Activated B cell treated with CpG ODN at 0.5 μM for 24 hours (primary cell): ENCODE measurements at regions of chr13 and their contacts with region 1.

Region 1: GRCh38 chr13:38872693-38873092 is 117.9 kb downstream of the STOML3 start:
- DNase-seq: no peak
- ATAC-seq: no peak
- H3K4me3 Mint-ChIP-seq: no peak overlapping the region
- H3K27ac Mint-ChIP-seq: no peak overlapping the region
- H3K4me1 Mint-ChIP-seq: no peaks in the 10 kb centered on the region
- H3K27me3 Mint-ChIP-seq: peaks cover 2% of the 10 kb centered on the region
- CTCF ChIP-seq: no peak

Region 2: DNA sequence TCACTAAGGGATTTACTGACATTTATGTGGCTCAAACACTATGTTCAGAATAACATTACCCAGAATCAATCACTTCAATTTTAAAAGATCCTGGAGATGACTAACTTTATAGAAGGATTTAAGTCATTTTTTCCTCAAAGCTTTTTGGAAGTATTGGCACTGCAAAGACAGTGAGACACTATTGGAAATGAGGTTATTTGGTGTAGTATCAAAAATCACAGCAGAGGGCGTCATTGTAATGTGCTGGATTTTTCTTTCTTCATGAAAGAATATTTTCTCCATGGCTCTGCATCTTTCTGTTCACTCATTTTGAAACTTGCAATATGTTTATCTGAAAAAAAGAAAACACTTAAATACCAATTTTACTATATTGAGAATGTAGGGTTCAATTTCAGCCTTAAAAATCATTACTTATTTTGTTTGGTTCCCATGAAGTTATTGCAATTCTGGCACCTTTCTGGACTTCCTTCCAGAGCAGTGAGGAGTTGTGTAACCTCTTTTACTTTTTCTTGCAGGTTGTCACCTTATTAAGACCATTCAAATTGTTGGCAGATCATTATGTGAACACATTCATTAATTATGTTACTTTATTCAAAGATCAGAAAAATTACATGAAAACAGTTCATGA is 1763.5 kb before region 1 on chr13:
- CTCF ChIA-PET with region 1: no interaction called
- POLR2A ChIA-PET with region 1: no interaction called
- intact Hi-C with region 1: loop called (anchors 1 kb)
- DNase-seq: no peak
- ATAC-seq: no peak
- H3K4me3 Mint-ChIP-seq: no peak overlapping the region
- H3K27ac Mint-ChIP-seq: no peak overlapping the region
- H3K4me1 Mint-ChIP-seq: no peaks in the 10 kb centered on the region
- H3K27me3 Mint-ChIP-seq: peaks cover 2% of the 10 kb centered on the region
- CTCF ChIP-seq: no peak

Region 3: DNA sequence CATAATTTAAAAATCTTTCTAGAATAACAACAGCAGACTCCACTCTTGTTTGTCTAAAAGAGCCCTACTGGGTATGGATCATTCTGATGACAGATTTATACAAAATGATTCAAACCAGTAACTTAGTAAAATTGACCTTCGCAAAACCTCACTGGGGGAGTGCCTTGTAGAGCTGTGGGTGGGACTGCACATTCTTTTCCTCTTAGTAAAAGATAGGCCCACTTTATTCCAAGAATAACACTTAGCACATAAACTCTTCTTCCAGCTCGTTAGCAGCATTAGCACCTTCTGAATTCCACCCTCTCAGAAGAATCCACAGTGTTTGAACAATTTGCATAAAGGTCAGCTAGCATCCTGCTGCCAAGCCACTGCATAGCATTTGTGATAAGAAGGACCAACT is 11.1 kb after region 1 on chr13:
- CTCF ChIA-PET with region 1: no interaction called
- POLR2A ChIA-PET with region 1: no interaction called
- intact Hi-C with region 1: no loop called
- DNase-seq: no peak
- ATAC-seq: no peak
- H3K4me3 Mint-ChIP-seq: no peak overlapping the region
- H3K27ac Mint-ChIP-seq: no peak overlapping the region
- H3K4me1 Mint-ChIP-seq: no peaks in the 10 kb centered on the region
- H3K27me3 Mint-ChIP-seq: peaks cover 8% of the 10 kb centered on the region
- CTCF ChIP-seq: no peak